Ovary (tissue), 10 donors: ENCODE measurements at regions of chr6 and their contacts with region 1.

Region 1: DNA sequence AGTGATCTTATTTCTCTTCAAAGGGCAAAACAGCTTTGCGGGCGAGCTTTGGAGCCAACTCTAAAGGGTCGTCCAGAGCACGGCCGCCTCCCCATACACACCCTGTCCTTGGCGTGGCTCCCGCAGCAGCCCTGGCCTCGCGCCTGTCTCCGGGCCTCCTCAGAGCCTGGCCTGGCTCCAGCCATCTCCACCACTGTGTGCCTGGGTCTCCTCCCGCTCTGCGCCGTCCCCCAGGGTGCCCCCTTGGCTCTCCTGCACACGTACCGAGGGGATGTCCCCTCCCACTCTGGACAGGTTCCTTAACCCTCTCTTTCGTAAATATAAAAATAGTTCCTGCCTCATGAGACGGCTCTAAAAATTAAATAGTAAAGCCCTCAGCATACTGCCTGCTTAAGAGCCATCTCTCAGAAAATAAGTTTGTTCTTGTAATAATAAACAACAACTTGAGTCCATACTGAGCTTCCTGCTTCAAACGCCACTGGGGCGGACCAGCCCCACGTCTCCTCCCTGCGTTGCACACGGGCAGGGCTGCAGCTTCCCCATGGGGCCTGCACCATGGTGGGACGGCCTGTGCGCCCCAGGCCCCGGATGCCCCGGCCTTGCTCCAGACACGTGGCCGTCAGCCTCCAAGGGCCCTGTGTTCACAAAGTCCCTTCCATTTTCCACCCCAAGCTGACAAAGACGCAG is 226.2 kb downstream of the TTLL2 start:
- DNase-seq: peak; percentile 92 to 99 (median 96)
- H3K4me3 ChIP-seq: no peak overlapping the region
- H3K27ac ChIP-seq: peak overlapping the region; percentile 81
- H3K4me1 ChIP-seq: peaks cover 15% of the 10 kb centered on the region
- H3K27me3 ChIP-seq: no peaks in the 10 kb centered on the region
- CTCF ChIP-seq: no peak
- EP300 ChIP-seq: no peak
- POLR2A ChIP-seq: no peak

Region 2: DNA sequence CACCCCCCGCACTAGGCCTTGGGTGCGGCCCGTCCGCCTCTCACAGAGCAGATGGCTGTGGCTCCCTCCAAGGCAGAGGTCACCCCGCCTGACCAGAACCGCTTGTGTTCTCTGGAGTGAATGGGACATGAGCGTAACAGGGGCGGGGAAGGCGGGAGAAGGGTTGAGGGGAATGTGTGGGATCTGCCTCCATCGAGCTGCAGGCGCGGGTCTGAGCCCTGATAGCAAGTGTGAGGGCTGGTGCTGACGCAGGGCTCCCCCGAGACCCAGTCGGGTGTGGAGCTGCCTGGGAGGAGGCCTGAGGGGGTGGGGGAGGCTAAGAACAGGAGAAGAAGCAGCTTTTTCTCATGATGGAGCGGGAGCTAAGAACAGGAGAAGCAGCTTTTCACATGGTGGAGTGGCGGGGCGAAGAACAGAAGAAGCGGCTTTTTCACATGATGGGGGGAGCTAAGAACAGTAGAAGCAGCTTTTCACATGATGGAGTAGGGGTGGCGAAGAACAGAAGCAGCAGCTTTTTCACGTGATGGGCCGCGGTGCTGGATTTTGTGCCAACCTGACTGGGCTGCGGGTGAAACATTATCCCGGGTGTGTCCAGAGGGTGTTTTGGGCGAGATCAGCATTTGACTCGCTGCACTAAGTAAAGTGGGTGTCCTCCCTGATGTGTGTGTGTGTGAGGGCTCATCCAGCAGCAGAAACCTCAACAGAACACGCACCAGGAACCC is 56.9 kb before region 1 on chr6:
- intact Hi-C with region 1: loop called in 1 of 4 experiments (anchors 5 kb)
- DNase-seq: peak; percentile 71 to 93 (median 82)
- H3K4me3 ChIP-seq: peak overlapping the region; percentile 0
- H3K27ac ChIP-seq: peak overlapping the region in 1 of 2 donors; percentile 4
- H3K4me1 ChIP-seq: no peaks in the 10 kb centered on the region
- H3K27me3 ChIP-seq: no peaks in the 10 kb centered on the region
- CTCF ChIP-seq: no peak
- EP300 ChIP-seq: no peak
- POLR2A ChIP-seq: no peak

Region 3: GRCh38 chr6:167528239-167528638 is 22.8 kb before region 1 on chr6:
- intact Hi-C with region 1: no loop called
- DNase-seq: no peak
- H3K4me3 ChIP-seq: no peak overlapping the region
- H3K27ac ChIP-seq: no peak overlapping the region
- H3K4me1 ChIP-seq: no peaks in the 10 kb centered on the region
- H3K27me3 ChIP-seq: no peaks in the 10 kb centered on the region
- CTCF ChIP-seq: no peak
- EP300 ChIP-seq: no peak
- POLR2A ChIP-seq: no peak

Region 4: DNA sequence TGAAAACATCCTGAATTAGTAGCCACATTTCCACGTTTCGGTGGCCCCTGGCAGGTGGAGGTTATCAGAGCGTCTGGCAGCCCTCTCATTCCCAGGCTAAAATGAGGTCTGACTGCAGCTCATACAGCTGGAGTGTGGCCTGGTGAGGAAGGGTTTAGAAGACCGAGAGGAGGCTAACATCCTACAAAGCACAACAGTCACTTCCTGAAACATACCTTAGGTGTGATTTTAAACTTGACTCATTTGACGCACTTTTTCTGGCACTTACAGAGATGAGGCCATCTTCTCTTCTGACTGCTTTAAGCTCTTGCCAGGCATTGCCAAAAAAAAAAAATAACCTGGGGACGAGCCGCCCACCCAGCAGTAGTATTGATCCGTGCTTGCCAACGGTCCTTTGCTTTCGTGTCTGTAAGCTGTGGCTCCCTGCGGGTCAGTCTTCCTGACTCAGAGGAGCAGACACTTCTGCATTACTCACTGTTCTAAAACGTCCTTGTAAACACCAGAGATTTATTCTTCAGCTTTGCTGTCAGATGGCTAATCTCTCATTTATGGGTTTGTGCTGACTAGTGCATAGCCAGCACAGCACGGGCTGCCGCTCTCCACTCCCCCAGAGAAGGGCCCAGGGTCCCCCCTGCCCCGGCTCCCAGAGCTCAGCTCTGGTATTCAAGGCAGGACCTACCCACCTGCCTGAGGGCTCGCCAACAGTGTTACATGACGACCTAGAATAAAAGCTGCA is 606.4 kb after region 1 on chr6:
- intact Hi-C with region 1: no loop called
- DNase-seq: no peak
- H3K4me3 ChIP-seq: no peak overlapping the region
- H3K27ac ChIP-seq: no peak overlapping the region
- H3K4me1 ChIP-seq: peaks cover 2% of the 10 kb centered on the region
- H3K27me3 ChIP-seq: no peaks in the 10 kb centered on the region
- CTCF ChIP-seq: no peak
- EP300 ChIP-seq: no peak
- POLR2A ChIP-seq: no peak